HEK293T (cell line): ENCODE measurements at regions of chr12 and their contacts with region 1.

Region 1: DNA sequence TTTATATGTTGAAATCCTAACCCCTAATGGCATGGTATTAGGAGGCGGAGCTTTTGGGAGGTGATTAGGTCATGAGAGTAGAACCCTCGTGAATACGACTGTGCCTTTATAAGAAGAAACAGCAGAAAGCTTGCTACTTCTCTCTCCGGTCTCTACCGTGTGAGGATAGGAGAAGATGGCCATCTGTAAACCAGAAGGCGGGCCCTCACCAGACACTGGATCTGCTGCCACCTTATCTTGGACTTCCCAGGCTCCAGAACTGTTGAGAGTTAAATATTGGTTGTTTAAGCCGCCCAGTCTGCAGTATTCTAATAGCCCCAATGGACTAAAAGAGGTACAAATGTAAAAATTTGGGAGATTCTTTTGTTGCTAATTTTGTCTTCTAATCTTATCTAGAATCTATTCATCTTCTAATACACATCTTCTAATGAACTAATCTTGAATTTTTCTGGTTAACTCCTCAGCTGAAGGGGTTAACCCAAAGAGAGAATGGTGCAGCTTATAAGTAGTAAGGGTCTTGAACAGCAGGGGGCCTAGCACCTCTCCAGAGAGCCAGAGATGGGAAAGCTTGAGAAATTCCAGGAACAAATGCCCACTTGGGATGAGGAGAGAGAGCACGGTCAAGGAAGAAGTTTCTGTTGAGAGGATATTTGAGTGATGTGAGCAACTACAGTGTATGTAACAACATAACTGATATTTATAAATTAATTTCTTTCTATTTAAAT is 264.0 kb upstream of the GRIP1 start:
- DNase-seq: no peak

Region 2: DNA sequence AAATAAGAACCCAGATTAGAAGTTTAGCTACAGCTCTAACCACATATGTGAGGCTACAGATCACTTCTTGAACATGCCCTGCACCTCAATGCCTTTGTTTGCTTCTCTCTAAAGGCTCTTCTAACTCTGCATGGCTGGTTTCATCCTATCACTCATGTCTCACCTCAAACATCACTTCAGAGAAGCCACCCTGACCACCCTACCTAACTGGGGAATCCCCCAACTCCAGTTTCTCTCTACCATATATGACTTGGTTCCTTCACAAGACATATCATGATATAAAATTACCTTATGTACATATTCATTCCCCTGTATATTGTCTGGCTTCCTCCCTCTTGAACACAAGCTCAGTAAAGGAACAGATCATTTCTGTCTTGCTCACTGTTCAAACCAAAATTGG is 13.8 kb before region 1 on chr12:
- CTCF ChIA-PET with region 1: no interaction called
- POLR2A ChIA-PET with region 1: no interaction called
- DNase-seq: no peak

Region 3: DNA sequence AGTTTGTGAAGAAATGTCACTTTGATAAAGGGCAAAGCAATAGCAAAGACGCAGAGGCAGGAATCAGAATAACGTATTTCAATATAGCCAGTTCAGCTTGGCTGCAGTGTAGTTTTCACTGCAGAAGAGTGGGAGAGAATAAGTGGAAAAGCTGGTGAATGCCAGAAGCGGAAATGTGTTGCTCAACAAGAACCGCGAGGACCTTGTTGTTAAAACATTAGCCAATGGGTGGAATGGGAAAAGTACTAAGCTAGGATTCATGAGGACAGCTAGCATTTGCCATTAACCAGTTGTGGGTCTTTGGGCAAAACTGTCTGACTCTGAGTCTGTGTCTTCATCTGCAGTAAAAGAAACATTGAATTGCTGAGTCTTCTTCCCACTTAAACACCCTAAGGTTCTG is 28.9 kb after region 1 on chr12:
- CTCF ChIA-PET with region 1: interaction called, 14 read pairs
- POLR2A ChIA-PET with region 1: no interaction called
- DNase-seq: no peak